BJ (cell line): ENCODE measurements at regions of chr11 and their contacts with region 1.

Region 1: DNA sequence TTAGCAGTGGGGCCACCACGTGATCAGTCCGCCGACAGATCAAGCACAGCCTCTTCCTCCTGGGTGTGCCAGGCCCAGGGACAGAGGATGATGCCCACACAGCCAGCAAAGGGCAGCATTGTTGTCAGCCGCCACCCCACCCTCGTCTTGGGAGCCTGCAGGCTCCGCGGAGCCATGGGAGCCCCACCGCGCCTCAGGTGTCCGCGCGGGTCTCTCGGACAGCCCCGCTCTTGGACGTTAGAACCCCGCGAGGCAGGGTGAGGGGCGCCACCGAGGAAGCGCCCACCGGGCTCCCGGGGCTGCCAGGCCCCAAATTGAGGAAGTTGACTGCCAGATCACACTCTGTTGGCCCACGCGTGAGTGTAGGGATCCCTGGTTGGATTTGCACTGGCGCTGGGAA is 83.9 kb upstream of the MS4A8 start:
- DNase-seq: no peak
- H3K4me3 ChIP-seq: no peak overlapping the region
- H3K27me3 ChIP-seq: no peaks in the 10 kb centered on the region
- CTCF ChIP-seq: no peak

Region 2: DNA sequence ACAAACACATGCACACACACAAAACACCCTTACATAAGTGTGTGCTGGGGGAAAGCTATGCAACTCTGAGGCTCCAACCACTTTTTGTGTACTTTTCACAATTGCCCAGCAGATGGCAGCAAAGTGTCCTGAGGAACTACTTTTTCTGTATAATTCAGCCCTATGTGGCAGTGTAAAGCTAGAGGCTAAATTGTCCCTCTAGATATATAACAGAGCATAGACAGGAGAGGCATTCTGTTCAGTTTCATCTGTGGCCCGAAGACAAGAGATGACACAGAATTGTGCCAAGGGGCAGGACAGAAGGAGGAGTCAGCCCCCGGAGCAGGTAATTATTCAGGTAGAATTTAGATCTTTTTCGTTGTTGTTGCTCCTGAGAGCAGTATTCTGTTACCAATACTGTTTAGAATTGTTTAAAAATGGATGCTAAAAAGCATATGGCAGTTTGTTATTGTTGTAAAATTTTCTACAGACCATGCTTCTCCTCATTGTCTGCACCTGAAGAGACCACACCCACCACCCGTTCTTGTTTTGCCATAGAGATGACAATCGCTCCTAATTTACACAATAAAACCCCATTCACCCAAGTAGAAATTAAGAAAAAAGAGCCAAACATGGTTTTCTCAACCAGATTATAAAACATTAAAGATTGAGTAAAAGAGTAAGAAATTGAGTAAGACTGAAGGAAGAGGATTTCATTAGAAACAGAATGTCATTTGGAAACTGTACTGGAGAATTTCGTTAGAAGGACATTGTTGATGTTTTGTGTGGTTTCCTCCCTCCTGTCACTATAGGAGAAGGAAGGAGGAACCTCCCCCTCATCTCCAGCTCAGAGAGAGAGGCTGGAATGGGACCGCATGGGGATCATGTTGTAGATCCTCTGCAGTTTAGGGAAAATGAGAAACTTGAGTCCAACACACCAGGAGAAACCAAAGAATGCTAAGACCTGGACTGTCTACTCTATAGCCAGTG is 251.7 kb before region 1 on chr11:
- CTCF ChIA-PET with region 1: interaction called, 15 read pairs
- POLR2A ChIA-PET with region 1: no interaction called
- DNase-seq: peak; percentile 2
- H3K4me3 ChIP-seq: no peak overlapping the region
- H3K27me3 ChIP-seq: no peaks in the 10 kb centered on the region
- CTCF ChIP-seq: peak; percentile 73